ENCODE measurements at regions of chr2 and their contacts with region 1.

Region 1: DNA sequence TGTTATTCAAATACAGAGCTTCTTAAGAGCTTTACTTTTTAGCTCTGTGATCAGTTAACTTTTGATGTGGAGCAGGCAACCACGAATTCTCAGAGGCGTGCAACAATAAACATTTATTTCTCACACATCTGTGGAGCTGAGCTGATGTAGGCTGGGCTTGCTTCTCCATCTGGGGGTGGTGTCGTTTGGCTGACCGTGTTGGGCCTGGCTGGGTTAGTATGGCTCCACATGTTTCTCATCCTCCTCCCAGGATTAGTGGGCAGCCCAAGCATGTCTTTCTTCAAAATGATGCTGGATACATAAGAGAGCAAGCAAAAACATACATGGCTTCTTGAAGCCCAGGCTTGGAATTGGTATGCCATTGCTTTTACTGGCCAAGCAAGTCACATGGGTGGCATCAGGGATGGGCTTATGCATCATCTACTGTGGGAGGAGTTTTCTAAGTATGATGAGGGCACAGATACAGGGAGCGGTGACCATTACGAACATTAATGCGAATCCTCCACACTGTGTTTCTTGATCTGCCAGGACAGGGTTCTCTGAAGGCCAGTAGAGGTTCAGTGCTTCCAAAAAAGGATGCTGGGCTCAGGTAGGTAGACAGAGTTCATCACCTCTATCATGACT is 157.0 kb upstream of the TNP1 start:
- DNase-seq: peak in 1 of 3 donors; percentile 44
- ATAC-seq: no peak
- H3K4me3 ChIP-seq: no peak overlapping the region
- H3K27ac ChIP-seq: no peak overlapping the region
- H3K4me1 ChIP-seq: no peaks in the 10 kb centered on the region
- H3K27me3 ChIP-seq: no peaks in the 10 kb centered on the region

Region 2: GRCh38 chr2:217151509-217152206 is 134.8 kb after region 1 on chr2:
- intact Hi-C with region 1: loop called in 1 of 4 experiments (anchors 10 kb)
- DNase-seq: no peak
- ATAC-seq: peak in 1 of 2 donors; percentile 64
- H3K4me3 ChIP-seq: no peak overlapping the region
- H3K27ac ChIP-seq: no peak overlapping the region
- H3K4me1 ChIP-seq: no peaks in the 10 kb centered on the region
- H3K27me3 ChIP-seq: no peaks in the 10 kb centered on the region

Region 3: GRCh38 chr2:217732992-217733391 is 716.1 kb after region 1 on chr2:
- intact Hi-C with region 1: no loop called
- DNase-seq: no peak
- ATAC-seq: no peak
- H3K4me3 ChIP-seq: no peak overlapping the region
- H3K27ac ChIP-seq: no peak overlapping the region
- H3K4me1 ChIP-seq: peaks cover 22% of the 10 kb centered on the region
- H3K27me3 ChIP-seq: no peaks in the 10 kb centered on the region

Measured in right cardiac atrium (tissue), 5 donors.